ENCODE measurements at regions of chr12 and their contacts with region 1.

Region 1: DNA sequence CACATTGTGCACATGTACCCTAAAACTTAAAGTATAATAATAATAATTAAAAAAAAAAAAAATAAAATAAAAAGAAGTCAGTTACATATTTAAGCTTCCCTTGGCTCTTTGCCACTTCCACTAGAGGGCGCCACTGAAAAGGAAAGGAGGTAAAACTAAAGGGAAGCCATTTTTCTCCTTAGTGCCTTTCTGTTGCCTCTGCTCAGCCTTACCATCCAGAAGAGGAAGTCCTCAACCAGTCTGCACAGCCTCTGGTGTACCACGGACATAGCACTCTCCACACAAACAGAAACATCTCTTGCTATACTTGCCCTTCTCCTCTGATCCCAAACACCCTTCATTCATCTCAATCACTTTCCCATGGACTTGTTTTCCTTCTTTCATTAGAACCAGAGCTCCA is 169.0 kb upstream of the EEA1 start:
- DNase-seq: peak; percentile 23
- ATAC-seq: peak; percentile 98
- H3K4me3 Mint-ChIP-seq: no peak overlapping the region
- H3K27ac Mint-ChIP-seq: peak overlapping the region; percentile 46
- H3K4me1 Mint-ChIP-seq: peaks cover 18% of the 10 kb centered on the region
- H3K27me3 Mint-ChIP-seq: no peaks in the 10 kb centered on the region
- CTCF ChIP-seq: peak; percentile 34

Region 2: DNA sequence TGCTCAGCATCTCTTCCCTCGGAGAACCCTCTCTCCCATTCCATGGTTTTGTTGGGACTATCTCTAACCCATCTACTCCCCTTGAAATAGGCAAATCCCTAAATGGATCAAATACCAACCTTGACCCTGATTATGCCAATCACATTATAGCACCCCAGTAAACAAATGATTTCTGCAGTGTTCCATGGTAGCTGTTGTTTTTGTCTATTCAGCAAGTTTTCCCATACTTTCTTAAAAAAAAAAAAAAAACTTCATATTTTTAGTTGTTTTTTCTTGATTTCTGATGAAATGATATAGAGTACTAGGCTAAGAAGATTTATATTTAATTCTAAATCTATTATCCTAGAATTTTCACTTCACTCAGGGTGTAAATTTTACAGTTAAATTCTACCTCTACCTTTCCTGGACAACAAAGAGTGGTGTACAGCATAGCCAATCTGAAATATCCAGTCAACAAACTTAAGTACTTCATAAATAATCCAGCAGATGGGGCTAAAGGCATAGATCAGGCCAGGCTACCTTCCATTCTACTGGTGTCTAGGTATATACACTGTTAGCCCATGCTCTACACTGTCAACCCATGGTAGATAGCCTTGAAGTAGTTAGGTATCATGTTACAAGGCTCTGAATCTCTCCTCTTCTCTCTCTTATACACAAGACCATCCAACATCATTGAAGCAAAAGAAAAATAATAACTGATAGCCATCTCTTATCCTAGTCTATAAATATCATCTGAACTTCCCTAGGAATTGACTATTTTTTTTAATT is 313.1 kb before region 1 on chr12:
- CTCF ChIA-PET with region 1: interaction called, 4 read pairs
- POLR2A ChIA-PET with region 1: no interaction called
- intact Hi-C with region 1: loop called (anchors 1 kb)
- DNase-seq: no peak
- ATAC-seq: peak; percentile 98
- H3K4me3 Mint-ChIP-seq: no peak overlapping the region
- H3K27ac Mint-ChIP-seq: no peak overlapping the region
- H3K4me1 Mint-ChIP-seq: no peaks in the 10 kb centered on the region
- H3K27me3 Mint-ChIP-seq: no peaks in the 10 kb centered on the region
- CTCF ChIP-seq: no peak

Region 3: DNA sequence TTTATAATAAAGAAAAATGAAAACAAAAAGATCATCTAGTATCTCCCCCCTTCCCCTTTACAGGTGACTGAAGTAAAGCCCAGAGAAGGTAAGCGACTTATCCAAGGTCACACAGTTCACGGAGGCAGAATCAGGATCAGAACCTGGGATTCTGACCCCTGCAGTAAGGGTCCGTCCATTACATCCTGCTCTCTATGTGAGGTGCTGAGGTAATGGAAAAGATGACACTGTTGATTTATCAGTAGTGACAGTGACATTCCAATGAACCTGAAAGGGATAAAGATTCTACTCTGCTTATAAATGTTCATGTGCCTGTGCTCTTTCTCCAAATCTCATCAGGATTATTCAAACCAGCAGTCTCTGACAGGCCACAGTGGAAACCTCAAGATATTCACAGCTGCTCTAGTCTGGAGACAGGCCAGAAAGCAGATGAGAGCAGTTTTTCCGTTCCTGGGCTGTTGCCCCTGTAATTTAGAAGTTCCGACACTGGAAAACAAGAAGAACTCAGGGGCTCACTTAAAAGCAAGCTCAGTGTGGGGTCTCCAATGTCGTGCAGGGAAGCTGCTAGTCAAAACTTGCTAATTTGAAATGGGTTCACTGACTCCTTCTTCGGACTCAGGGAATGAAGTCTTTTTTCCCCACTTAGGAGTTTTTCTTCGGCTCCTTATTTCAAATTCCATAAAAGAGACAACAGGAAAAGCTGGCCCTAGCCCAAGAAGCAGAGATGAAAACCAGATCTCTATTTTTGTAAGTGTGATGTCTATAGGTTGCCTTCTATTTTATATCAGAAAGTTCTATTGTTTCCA is 37.2 kb before region 1 on chr12:
- CTCF ChIA-PET with region 1: no interaction called
- POLR2A ChIA-PET with region 1: no interaction called
- intact Hi-C with region 1: no loop called
- DNase-seq: no peak
- ATAC-seq: peak; percentile 13
- H3K4me3 Mint-ChIP-seq: no peak overlapping the region
- H3K27ac Mint-ChIP-seq: no peak overlapping the region
- H3K4me1 Mint-ChIP-seq: peaks cover 16% of the 10 kb centered on the region
- H3K27me3 Mint-ChIP-seq: peaks cover 10% of the 10 kb centered on the region
- CTCF ChIP-seq: no peak

Region 4: DNA sequence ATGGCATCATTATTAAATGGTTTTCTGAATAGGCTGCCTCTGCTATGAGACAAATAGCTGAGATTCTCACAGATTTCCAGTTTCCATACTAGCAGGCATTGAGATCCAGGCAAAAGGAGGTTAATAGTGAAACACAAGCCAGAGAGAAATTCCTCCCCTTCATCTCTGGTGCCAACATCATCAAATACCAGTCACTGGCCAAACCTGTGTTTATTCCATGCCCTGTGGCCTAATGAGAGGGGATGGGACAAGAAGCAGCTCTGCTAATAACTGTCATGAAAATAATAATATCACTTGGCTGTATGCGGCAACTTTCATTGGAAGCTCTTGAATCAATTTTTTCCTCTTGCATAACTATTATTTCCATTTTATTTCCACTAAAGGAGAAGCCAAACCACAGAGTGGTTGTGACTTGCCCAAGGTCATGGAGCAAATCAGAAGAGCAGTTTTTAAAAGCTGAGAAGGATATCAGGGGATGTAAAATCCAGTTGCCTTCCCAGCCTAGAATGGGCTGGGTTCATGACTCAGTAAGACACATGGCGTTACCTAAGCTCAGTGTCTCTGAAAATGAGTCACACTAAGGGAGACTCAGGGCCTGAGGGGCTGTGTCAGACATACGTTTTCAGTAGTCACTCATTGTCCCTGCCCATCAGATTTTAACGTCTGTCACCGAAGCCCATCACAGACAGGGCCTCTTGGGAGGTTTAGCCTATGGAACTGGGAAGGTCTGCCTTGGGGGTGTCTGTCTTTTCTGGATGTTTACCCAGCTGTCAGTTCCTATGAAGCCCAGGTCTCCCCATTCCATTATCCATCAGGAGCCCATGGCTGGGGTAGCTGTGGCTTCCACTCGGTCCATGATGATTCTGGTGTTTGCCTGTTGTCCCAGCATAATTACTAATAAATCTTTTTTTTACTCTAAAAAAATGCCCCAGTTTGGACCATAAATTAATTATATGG is 39.9 kb after region 1 on chr12:
- CTCF ChIA-PET with region 1: interaction called, 20 read pairs
- POLR2A ChIA-PET with region 1: interaction called, 4 read pairs
- intact Hi-C with region 1: loop called (anchors 1 kb)
- DNase-seq: no peak
- ATAC-seq: peak; percentile 40
- H3K4me3 Mint-ChIP-seq: peak overlapping the region; percentile 13
- H3K27ac Mint-ChIP-seq: peak overlapping the region; percentile 85
- H3K4me1 Mint-ChIP-seq: peaks cover 62% of the 10 kb centered on the region
- H3K27me3 Mint-ChIP-seq: no peaks in the 10 kb centered on the region
- CTCF ChIP-seq: no peak

Region 5: GRCh38 chr12:93183940-93184671 is 86.0 kb after region 1 on chr12:
- CTCF ChIA-PET with region 1: no interaction called
- POLR2A ChIA-PET with region 1: no interaction called
- intact Hi-C with region 1: loop called (anchors 5 kb)
- DNase-seq: no peak
- ATAC-seq: peak; percentile 94
- H3K4me3 Mint-ChIP-seq: peak overlapping the region; percentile 40
- H3K27ac Mint-ChIP-seq: peak overlapping the region; percentile 86
- H3K4me1 Mint-ChIP-seq: peaks cover 50% of the 10 kb centered on the region
- H3K27me3 Mint-ChIP-seq: no peaks in the 10 kb centered on the region
- CTCF ChIP-seq: no peak

Region 6: DNA sequence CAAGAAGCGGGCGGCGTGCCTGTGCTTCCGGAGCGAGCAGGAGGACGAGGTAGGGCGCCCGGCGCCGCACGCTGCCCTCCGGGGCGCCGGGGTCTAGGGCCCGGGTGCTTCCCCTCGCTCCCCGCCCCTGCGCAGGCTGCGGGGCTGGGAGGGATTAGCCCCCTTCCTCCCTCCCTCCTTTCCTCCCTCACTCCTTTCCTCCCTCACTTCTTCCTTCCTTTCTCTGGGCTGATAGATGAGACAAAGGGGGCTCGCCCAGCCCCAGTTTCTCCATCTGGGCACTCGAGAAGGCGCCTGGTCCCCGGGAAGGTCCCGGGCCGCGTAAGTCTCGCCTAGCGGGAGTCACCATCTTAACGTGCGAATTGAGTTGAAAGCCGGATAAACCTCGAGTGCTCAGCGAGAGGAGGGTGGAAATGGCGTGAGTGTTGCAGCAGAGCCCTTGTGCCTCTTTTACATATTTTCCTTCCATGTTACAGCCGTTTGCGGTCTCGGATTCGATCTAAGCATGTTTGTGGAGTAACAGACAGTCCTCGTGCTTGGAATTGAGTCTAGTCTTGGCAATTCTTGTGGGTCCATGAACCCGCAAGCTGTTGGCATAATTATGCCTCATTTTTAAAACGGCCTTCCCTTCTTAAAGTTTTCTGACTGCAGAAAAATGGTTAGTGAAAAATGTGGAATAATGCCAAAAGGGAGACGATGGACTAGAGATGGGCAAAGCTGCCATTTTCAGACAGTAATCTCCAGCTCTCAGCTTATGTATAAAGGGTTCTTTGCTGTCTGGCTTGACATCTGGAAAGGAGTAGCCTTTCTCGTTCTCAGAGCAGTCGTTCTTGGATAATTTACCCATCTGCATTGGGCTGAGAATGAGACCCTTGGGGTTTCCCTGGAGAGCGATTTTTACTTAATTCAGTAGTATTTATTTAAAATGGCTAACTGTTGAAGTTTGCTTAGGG is 280.6 kb after region 1 on chr12:
- CTCF ChIA-PET with region 1: interaction called, 47 read pairs
- POLR2A ChIA-PET with region 1: no interaction called
- intact Hi-C with region 1: loop called (anchors 1 kb)
- DNase-seq: peak; percentile 57
- ATAC-seq: peak; percentile 40
- H3K4me3 Mint-ChIP-seq: peak overlapping the region; percentile 100
- H3K27ac Mint-ChIP-seq: peak overlapping the region; percentile 100
- H3K4me1 Mint-ChIP-seq: peaks cover 41% of the 10 kb centered on the region
- H3K27me3 Mint-ChIP-seq: no peaks in the 10 kb centered on the region
- CTCF ChIP-seq: no peak

Region 7: DNA sequence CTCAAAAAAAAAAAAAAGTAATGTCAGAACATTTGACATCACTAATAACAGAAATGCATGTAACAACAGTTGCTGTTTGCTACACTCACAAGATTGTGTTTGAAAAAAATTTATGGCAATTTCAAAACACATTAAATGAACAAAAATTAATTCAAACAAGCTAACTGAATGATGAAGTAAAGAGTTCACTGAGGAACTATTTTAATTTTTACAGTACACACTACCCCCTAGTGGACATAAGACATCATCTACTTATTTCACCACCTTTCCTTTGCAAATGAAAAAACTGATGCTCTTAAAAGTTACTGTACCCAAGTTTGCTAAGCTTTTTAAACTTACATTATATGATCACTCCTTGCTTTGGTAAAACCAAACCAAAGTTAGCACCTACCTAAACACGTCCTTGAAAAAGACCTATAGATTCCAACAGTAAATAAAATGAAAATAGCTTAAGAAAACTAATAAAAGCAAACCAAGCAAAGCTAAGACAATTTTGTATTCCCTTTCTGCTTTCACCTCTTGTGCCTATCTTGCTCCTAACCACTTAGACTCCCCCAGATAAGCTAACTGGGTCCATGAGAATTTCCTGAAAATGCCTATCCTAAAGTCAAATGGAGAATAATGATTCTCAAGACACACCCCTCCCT is 321.4 kb after region 1 on chr12:
- CTCF ChIA-PET with region 1: interaction called, 18 read pairs
- POLR2A ChIA-PET with region 1: interaction called, 4 read pairs
- intact Hi-C with region 1: loop called (anchors 1 kb)
- DNase-seq: no peak
- ATAC-seq: peak; percentile 56
- H3K4me3 Mint-ChIP-seq: no peak overlapping the region
- H3K27ac Mint-ChIP-seq: peak overlapping the region; percentile 31
- H3K4me1 Mint-ChIP-seq: peaks cover 87% of the 10 kb centered on the region
- H3K27me3 Mint-ChIP-seq: no peaks in the 10 kb centered on the region
- CTCF ChIP-seq: peak; percentile 68

Region 8: GRCh38 chr12:93441617-93442410 is 343.7 kb after region 1 on chr12 and contains the start of gene UBE2N:
- CTCF ChIA-PET with region 1: no interaction called
- POLR2A ChIA-PET with region 1: no interaction called
- intact Hi-C with region 1: no loop called
- DNase-seq: peak; percentile 99
- ATAC-seq: peak; percentile 84
- H3K4me3 Mint-ChIP-seq: peak within 1 kb of the TSS; percentile 96
- H3K27ac Mint-ChIP-seq: peak within 1 kb of the TSS; percentile 96
- H3K4me1 Mint-ChIP-seq: peaks cover 56% of the 10 kb centered on the region
- H3K27me3 Mint-ChIP-seq: no peaks in the 10 kb centered on the region
- CTCF ChIP-seq: no peak
- total RNA-seq, gene UBE2N: 152 and 163 TPM in 2 replicates